SK-N-SH (cell line): ENCODE measurements at regions of chr2 and their contacts with region 1.

Region 1: DNA sequence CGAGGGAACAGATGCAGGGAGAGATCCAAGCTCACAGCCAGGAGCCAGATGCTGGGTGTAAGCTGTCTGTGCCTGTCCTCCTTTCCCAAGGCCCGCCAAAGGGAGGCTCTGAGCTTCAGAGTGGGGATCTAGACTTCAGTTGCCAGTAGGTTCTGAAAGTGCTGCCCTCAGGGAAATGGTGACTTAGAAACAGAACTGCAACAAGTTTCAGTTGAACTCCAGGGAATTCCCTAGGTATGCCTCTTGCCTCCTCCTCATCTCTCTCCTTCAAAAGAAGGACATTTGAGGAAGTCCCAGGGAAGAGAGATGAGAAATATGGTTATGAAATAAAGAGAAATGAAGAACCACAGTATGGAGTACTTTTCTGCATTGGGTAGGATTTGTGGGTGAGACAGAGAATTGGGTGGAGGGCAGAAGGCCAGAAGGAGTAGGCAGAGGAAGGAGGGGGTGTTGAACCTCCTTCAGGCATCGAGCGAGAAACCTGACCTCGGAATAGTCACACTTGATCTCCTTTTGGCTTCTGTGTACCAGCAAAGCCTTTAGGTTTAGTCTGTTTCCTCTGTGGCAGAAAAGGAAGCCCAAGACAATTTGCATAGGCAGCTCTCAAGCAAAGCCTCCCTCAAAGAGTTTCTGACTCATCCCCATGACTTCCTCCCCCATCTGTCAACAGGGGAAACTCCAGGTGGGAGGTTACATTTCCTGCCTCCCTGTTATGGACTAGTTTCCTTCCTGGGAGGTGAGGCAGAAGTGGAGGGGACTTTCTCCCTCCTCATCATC is 45.7 kb downstream of the QPCT start:
- DNase-seq: no peak
- H3K4me3 ChIP-seq: no peak overlapping the region
- H3K27ac ChIP-seq: peak overlapping the region in 1 of 2 experiments; percentile 68; a peak in 2 of 4 replicates
- H3K4me1 ChIP-seq: peaks cover 6 to 32% of the 10 kb centered on the region in 2 experiments; a peak in 3 of 4 replicates
- H3K27me3 ChIP-seq: no peaks in the 10 kb centered on the region
- CTCF ChIP-seq: no peak
- EP300 ChIP-seq: peak in 1 of 2 experiments; percentile 62; a peak in 1 of 4 replicates
- RAD21 ChIP-seq: no peak

Region 2: DNA sequence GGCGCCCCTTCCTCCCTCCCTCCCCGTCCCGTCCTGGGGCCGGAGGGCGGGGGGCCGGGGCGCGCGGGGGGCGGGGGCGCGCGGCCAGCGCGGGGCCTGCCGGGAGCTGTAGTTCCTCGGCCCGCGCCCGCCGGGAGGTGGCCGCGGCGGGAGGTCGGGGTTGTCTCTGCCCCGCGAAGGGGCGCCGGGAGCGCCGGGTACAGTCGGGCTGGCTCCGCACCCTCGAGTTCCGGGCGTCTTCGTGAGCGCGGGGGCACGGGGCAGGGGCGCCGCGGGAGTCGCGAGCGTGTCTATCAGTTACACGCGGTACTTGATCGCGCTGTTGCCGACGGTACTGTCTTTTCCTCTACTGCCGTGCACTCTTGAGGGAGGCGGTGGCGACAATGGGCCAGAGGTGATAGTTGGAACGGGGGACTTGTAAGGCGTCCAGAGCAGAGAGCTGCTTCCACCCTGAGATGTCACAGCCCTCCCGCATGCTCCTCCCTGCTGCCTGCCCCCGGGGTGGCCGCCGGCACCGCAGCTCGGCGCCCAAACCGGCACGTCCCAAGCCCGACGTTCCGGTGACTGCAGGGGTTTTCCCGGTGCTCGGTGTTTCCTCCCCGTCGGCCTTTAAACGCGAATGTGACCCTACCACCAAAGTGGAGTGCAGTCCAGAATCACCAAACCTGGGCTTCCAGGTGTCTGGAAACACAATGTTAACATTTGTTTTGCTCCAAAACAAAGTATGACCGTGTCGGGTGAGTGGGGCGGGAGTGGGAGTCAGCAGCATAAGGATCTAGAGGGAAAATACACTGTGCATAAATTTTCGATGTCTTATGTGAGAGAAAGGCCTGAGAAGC is 65.2 kb before region 1 on chr2 and contains the start of gene PRKD3:
- CTCF ChIA-PET with region 1: interaction called, 25 read pairs
- POLR2A ChIA-PET with region 1: no interaction called
- DNase-seq: peak; percentile 99
- H3K4me3 ChIP-seq: peak within 1 kb of the TSS; percentile 92 to 96
- H3K27ac ChIP-seq: peak within 1 kb of the TSS; percentile 74 to 93
- H3K4me1 ChIP-seq: peaks cover 21 to 51% of the 10 kb centered on the region in 2 experiments; a peak in 3 of 4 replicates
- H3K27me3 ChIP-seq: no peaks in the 10 kb centered on the region
- CTCF ChIP-seq: no peak
- EP300 ChIP-seq: no peak
- RAD21 ChIP-seq: no peak
- polyA plus RNA-seq, gene PRKD3: 15.9 and 17.5 TPM in 2 replicates

Region 3: DNA sequence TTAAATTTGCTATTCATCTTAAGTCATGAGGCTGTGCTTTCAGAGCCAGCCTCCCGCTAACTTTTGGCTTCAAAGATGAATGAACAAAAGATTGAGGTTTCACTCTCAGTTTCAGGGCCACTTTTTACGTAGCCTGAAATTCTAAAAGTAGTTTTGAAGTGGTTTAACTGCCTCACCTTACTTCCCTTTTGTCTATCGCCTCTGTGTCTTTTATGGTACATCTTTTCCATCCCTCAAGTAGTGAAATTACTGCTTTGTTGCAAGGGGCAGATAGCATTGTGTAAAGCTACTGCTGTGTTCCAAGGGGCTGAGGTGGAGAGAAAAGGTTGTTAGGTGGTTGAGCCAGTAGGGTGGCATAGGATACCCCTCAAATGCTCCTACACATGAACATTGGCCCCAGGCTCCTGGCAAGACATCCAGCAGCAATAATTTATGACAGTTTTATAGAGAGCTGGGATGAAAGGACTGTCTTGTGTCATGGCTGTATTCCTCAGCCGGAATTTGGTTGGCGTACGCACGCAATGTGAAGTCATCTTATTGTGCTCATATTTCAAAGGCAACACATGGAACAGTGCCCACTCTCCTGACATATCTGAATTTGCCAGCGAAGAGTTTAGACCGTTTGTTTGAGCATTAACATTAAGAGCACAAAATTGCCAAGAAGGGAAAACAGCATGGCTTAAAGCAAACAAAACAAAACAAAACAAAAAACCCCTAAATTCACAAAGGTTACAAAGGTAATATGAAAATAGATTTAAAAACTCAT is 13.6 kb before region 1 on chr2:
- CTCF ChIA-PET with region 1: interaction called, 43 read pairs
- POLR2A ChIA-PET with region 1: no interaction called
- DNase-seq: no peak
- H3K4me3 ChIP-seq: no peak overlapping the region
- H3K27ac ChIP-seq: no peak overlapping the region
- H3K4me1 ChIP-seq: no peaks in the 10 kb centered on the region
- H3K27me3 ChIP-seq: no peaks in the 10 kb centered on the region
- CTCF ChIP-seq: no peak
- EP300 ChIP-seq: no peak
- RAD21 ChIP-seq: no peak

Region 4: DNA sequence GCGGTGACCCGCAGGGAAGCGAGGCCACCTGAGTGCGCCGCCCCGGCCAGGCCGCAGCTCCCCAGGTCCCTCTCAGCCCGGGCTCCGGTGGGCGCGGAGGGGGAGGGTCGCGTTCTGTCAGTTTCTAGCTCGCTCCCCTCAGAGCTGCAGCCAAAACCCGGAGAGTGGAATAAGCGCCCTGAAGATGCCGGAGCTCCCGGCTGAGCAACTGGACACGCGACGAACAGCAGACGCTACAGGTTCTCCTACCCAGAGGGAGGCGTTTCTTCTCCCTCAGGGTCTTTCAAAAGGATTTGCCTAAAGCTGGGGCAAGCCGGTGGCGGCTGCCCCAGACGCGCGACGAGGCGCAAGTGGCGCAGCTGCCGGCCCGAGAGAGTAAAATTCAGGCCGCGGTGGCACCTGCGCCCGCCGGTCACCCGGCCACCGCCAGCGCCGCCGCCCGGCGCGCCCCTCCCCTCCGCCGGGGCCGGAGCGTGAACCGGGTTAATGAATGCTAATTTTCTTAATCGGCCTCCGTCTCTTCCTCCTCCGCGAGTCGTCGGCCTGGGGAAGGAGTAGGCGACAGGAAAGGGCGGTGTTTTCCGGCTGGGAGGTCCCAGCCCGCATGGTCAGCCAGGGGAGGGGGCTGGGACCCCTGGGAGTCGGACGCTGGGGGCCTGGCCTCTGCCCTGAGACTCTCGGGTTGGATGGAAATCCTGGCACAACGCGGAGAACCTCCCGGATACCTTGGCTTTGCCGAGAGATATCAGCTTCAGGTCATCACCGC is 282.1 kb after region 1 on chr2:
- CTCF ChIA-PET with region 1: interaction called, 11 read pairs
- POLR2A ChIA-PET with region 1: no interaction called
- DNase-seq: peak; percentile 98
- H3K4me3 ChIP-seq: peak overlapping the region; percentile 80 to 100
- H3K27ac ChIP-seq: peak overlapping the region; percentile 86 to 99
- H3K4me1 ChIP-seq: peaks cover 21 to 26% of the 10 kb centered on the region in 2 experiments
- H3K27me3 ChIP-seq: no peaks in the 10 kb centered on the region
- CTCF ChIP-seq: peak; percentile 10; the same call in 1 of the 2 replicates
- EP300 ChIP-seq: peak in 1 of 2 experiments; percentile 58; a peak in 2 of 4 replicates
- RAD21 ChIP-seq: peak; percentile 42

Region 5: DNA sequence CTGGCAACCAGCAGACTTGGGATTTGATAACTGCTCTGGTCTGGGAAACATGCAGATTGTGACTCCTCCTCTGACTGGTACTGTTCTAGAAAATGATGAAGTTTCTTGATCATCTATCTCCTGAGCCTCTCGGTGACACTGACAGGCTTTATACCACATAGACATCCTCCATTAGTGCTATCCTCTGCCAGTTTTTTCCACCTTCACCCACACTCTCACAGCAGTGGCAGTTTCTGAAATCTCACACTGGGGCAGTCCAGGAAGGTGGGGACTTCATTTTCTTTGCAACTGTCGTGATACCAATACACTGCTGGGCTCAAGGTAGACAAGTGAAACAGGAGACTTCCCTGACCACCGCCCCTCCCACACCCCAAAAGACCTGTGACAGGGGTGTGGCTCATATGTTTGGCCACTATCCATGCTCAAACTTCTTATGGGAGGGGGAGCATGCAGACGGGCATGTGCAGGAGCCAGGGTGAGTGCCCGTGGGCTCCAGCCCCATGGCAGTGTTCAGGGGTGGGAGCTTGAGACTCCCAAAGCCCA is 468.6 kb after region 1 on chr2:
- CTCF ChIA-PET with region 1: interaction called, 33 read pairs
- POLR2A ChIA-PET with region 1: no interaction called
- DNase-seq: no peak
- H3K4me3 ChIP-seq: no peak overlapping the region
- H3K27ac ChIP-seq: peak overlapping the region; percentile 73 to 99
- H3K4me1 ChIP-seq: peaks cover 26 to 49% of the 10 kb centered on the region in 2 experiments; a peak in 3 of 4 replicates
- H3K27me3 ChIP-seq: no peaks in the 10 kb centered on the region
- CTCF ChIP-seq: no peak
- EP300 ChIP-seq: no peak
- RAD21 ChIP-seq: no peak

Region 6: DNA sequence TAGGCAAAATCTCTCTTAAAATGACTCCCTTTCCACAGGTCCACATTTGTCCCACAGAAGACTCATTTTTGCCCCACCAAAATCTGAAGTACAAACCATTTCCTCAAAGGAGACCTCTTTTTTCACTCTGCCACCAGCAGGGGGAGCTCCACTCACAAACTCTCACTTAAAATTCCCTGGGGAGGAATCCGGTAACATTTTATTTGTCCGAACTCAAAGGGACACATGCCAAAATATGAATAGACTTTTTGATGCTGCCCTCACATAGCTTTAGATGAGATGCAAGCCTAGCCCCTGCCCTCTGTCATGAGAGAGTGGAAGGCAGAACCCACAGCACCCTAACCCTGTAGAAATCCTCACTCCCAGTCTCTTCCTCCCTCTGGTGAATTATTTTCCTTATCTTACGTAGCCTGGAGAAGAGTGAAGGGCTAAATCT is 592.0 kb after region 1 on chr2:
- CTCF ChIA-PET with region 1: interaction called, 10 read pairs
- POLR2A ChIA-PET with region 1: no interaction called
- DNase-seq: peak; percentile 60
- H3K4me3 ChIP-seq: peak overlapping the region; percentile 2 to 25; a peak in 1 of 4 replicates
- H3K27ac ChIP-seq: 0 out of 4 replicates have a peak overlapping the region, but pooled peaks of 1 of the 2 experiments have one; percentile 2
- H3K4me1 ChIP-seq: peaks cover 0 to 3% of the 10 kb centered on the region in 2 experiments; a peak in 2 of 4 replicates
- H3K27me3 ChIP-seq: no peaks in the 10 kb centered on the region
- CTCF ChIP-seq: peak; percentile 99
- EP300 ChIP-seq: no peak
- RAD21 ChIP-seq: peak; percentile 78

Region 7: DNA sequence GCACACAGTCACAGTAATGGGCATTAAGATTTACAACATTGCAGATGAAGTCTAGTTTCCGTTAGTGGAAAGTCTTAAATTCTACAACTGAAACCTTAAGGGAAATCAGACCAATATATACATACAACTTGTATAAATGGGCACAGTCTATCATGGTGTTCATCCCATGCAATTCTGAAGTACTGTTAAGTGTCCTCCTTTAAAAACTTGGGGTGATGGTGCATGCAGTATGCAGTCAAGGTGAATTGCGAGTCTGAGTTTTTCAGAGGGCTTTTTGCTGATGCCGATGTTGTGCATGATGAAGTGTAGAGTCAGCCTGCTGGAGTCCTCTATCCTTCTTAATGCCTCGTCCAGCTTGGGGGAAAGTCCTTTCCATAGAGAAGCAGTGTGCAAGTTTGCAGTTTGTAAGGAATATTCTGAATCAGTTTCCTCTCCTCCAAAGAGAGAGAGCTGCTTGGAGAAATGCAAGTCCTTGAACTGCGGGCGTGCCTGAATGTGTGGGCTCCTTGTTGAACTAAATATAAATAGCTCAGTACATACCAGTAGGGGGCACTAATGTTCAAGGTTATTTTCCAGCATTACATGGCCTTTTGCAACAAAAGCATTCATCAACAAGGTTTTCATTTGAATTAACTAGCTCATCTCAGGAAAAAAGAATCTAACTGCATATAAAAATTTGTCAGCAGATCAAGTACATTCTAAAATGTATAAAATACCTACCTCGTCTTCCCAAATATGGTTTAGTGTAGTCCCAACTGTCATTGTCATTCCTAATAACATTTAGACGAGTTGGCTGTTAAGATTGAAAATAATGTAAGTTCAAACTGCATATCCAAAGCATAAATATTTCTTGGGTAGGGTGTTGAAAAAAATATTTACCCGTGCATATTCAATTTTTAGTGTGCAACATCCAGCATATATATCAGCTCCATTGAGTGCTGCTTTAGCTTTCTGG is 1191.3 kb after region 1 on chr2:
- CTCF ChIA-PET with region 1: no interaction called
- POLR2A ChIA-PET with region 1: no interaction called
- DNase-seq: peak; percentile 44
- H3K4me3 ChIP-seq: no peak overlapping the region
- H3K27ac ChIP-seq: peak overlapping the region in 1 of 2 experiments; percentile 3; a peak in 1 of 4 replicates
- H3K4me1 ChIP-seq: peaks cover 0 to 13% of the 10 kb centered on the region in 2 experiments; a peak in 2 of 4 replicates
- H3K27me3 ChIP-seq: no peaks in the 10 kb centered on the region
- CTCF ChIP-seq: peak; percentile 89
- EP300 ChIP-seq: no peak
- RAD21 ChIP-seq: peak; percentile 89